Natural killer cell (primary cell): ENCODE measurements at regions of chr3 and their contacts with region 1.

Region 1: GRCh38 chr3:44761424-44762169 is at the starts of genes KIAA1143 and KIF15:
- DNase-seq: peak; percentile 97 to 99
- ATAC-seq: peak; percentile 97 to 98 (median 98)
- H3K4me3 ChIP-seq: peak within 1 kb of the TSS; percentile 60
- H3K4me3 Mint-ChIP-seq: peak within 1 kb of the TSS; percentile 93
- H3K27ac ChIP-seq: peak within 1 kb of the TSS; percentile 66
- H3K27ac Mint-ChIP-seq: peak within 1 kb of the TSS; percentile 89 to 90
- H3K4me1 ChIP-seq: peaks cover 13% of the 10 kb centered on the region
- H3K4me1 Mint-ChIP-seq: peaks cover 28 to 36% of the 10 kb centered on the region in 2 donors
- H3K27me3 ChIP-seq: no peaks in the 10 kb centered on the region
- H3K27me3 Mint-ChIP-seq: no peaks in the 10 kb centered on the region
- CTCF ChIP-seq: no peak
- total RNA-seq, gene KIAA1143: 25.4 to 28.6 (median 27.7) TPM
- total RNA-seq, gene KIF15: 0.80 to 1.6 (median 0.99) TPM

Region 2: DNA sequence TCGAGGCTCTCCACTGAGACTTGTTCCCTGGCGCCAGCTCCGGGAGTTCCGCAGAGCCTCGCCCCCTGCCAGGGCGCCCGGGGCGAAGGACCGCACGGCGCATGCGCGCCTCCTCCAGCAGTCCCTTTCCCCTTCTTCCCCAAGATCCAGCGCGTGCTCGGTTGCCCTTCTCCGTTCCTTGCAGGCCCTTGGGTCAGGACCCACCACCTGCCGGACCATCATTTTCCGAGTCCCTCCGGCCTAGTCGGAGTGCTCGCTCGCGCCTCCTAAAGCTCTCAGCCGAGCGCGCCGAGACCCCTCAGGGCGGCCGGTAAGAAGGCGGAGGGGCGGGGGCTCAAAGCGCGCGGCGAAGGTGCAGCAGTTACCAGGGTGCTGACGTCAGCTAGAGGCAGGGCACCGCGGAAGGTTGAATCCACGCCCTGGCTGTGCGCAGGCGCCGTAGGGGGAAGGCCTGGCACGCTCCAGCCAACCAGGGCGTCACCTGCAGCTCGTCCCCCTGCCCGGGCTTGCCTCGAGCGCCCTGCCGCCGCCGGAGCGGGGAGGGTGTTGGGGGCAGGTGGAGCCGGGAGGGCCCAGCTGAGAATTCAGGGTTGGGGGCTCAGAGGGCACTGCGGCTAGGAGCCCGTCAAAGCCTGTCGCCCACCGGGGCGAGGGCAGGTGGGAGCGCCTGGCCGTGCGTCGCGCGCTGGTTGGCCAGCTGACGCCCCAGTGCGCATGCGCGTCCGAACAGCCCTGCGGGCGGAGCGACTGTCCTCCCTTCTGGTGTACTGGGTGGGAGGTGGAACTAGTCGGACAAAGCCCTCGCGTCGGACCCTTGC is 423.4 kb before region 1 on chr3 and contains the start of gene TCAIM:
- intact Hi-C with region 1: loop called (anchors 10 kb)
- DNase-seq: peak; percentile 98 to 100
- ATAC-seq: peak; percentile 92 to 98 (median 93)
- H3K4me3 ChIP-seq: peak within 1 kb of the TSS; percentile 81
- H3K4me3 Mint-ChIP-seq: peak within 1 kb of the TSS; percentile 96
- H3K27ac ChIP-seq: peak within 1 kb of the TSS; percentile 87
- H3K27ac Mint-ChIP-seq: peak within 1 kb of the TSS; percentile 95 to 96
- H3K4me1 ChIP-seq: peaks cover 13% of the 10 kb centered on the region
- H3K4me1 Mint-ChIP-seq: peaks cover 25 to 32% of the 10 kb centered on the region in 2 donors
- H3K27me3 ChIP-seq: no peaks in the 10 kb centered on the region
- H3K27me3 Mint-ChIP-seq: peaks cover 6 to 9% of the 10 kb centered on the region in 2 donors
- CTCF ChIP-seq: no peak
- total RNA-seq, gene TCAIM: 10.9 to 11.2 (median 11.0) TPM

Region 3: DNA sequence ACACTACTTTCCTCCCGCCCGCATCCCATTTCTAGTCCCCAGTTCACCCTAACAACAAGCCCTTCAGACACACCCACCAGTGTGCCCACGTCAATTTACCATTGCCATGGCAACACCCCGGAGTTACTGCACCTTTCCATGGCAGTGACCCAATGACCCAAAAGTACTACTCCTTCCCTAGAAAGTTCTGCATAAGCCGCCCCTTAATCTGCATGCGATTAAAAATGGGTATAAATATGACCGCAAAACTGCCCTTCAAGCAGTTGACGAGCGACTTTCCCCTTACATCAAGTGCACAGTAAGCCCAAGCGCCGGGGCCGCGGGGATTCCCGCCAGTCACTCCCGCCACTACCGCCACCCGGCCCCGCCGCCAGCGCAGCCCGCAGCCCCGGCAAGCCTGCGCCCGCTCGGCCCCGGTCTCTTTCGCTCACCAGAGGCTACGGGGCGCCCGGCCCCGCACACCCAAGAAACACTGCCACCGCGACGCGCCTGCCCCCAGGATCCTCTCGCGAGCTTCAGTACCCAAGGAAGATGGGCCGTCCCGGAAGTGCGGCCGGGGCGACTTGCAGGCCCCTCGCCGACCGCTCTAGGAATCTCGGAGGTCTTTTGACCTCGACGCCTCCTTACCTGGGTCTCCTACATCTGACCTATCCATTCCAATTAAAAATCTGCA is 76.3 kb before region 1 on chr3:
- intact Hi-C with region 1: loop called (anchors 1 kb)
- DNase-seq: peak; percentile 61 to 68
- ATAC-seq: peak; percentile 75 to 91 (median 83)
- H3K4me3 ChIP-seq: peak overlapping the region; percentile 41
- H3K4me3 Mint-ChIP-seq: peak overlapping the region; percentile 85
- H3K27ac ChIP-seq: peak overlapping the region; percentile 5
- H3K27ac Mint-ChIP-seq: peak overlapping the region; percentile 76 to 86
- H3K4me1 ChIP-seq: peaks cover 9% of the 10 kb centered on the region
- H3K4me1 Mint-ChIP-seq: peaks cover 18 to 21% of the 10 kb centered on the region in 2 donors
- H3K27me3 ChIP-seq: no peaks in the 10 kb centered on the region
- H3K27me3 Mint-ChIP-seq: peaks cover 16 to 25% of the 10 kb centered on the region in 2 donors
- CTCF ChIP-seq: no peak

Region 4: DNA sequence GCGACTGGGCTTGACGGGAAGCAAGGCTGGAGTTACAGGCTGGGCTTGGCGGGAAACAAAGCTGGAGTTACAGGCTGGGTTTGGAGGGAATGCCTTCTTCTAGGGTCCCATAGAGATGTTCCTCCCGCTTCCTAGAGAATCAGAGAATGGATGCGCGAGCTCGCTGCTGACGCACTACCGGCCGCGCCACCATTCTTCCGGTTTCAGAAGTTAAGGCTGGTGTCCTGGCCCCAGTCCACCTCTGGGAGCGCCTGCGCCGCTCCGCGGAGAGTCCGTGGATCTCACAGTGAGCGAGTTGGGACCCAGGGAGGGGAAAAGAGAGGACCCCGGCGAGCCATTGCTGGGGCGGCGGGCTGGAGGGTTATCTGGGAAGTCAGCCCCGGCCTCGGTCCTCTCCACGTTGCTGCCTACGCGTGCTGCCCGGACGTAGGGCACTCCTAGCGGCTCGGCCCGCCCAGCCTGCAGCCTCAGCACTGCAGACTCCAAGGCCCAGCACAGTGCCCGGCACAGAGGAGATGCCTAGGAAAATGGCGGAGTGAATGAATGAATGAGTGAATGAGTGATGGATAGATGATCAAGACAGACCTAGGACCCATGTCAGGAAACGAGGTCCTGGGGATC is 49.0 kb before region 1 on chr3 and contains the start of gene ZNF502:
- intact Hi-C with region 1: loop called (anchors 5 kb)
- DNase-seq: peak; percentile 66 to 77
- ATAC-seq: peak; percentile 86 to 98 (median 96)
- H3K4me3 ChIP-seq: peak within 1 kb of the TSS; percentile 82
- H3K4me3 Mint-ChIP-seq: peak within 1 kb of the TSS; percentile 100
- H3K27ac ChIP-seq: peak within 1 kb of the TSS; percentile 62
- H3K27ac Mint-ChIP-seq: peak within 1 kb of the TSS; percentile 96
- H3K4me1 ChIP-seq: peaks cover 11% of the 10 kb centered on the region
- H3K4me1 Mint-ChIP-seq: peaks cover 14 to 17% of the 10 kb centered on the region in 2 donors
- H3K27me3 ChIP-seq: peaks cover 4% of the 10 kb centered on the region
- H3K27me3 Mint-ChIP-seq: peaks cover 9 to 29% of the 10 kb centered on the region in 2 donors
- CTCF ChIP-seq: peak; percentile 25
- total RNA-seq, gene ZNF502: 2.8 to 7.0 (median 4.4) TPM

Region 5: DNA sequence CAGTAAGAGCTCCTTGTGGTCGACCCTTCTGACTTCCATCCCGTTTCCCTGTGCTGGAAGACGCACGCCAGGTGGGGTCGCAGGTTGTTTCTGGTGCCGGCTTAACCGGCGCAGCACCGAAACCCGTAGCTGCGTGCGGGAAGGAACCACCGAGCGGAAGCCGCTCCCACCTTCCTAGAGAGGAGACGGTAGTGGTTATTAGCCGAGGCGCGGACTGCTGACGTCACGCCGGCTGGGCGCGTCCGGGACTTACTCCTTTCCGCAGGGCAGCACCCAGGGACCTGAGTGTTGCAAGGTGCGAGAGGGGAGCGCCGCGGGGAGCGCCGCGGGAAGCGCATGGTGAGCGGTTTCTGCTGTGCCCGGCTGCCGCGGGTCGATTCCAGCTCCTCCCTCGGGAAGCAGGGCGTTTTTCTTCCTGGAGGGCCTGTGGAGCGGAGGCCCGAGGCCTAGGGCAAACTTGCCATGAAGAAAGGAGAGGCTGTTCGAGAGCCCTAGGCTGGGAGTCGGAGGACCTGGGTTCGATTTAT is 32.1 kb before region 1 on chr3 and contains the start of gene ZNF501:
- intact Hi-C with region 1: loop called (anchors 1 kb)
- DNase-seq: peak; percentile 79 to 91
- ATAC-seq: peak; percentile 86 to 96 (median 96)
- H3K4me3 ChIP-seq: peak within 1 kb of the TSS; percentile 60
- H3K4me3 Mint-ChIP-seq: peak within 1 kb of the TSS; percentile 99
- H3K27ac ChIP-seq: no peak within 1 kb of the TSS
- H3K27ac Mint-ChIP-seq: peak within 1 kb of the TSS; percentile 94 to 98
- H3K4me1 ChIP-seq: peaks cover 3% of the 10 kb centered on the region
- H3K4me1 Mint-ChIP-seq: peaks cover 17% of the 10 kb centered on the region in 2 donors
- H3K27me3 ChIP-seq: no peaks in the 10 kb centered on the region
- H3K27me3 Mint-ChIP-seq: no peaks in the 10 kb centered on the region
- CTCF ChIP-seq: no peak
- total RNA-seq, gene ZNF501: 0.40 to 2.2 (median 1.7) TPM

Region 6: GRCh38 chr3:44861412-44862220 is 100.0 kb after region 1 on chr3 and contains the start of gene TMEM42:
- intact Hi-C with region 1: loop called (anchors 1 kb)
- DNase-seq: peak; percentile 92 to 95
- ATAC-seq: peak; percentile 93 to 95 (median 94)
- H3K4me3 ChIP-seq: peak within 1 kb of the TSS; percentile 81
- H3K4me3 Mint-ChIP-seq: peak within 1 kb of the TSS; percentile 94
- H3K27ac ChIP-seq: peak within 1 kb of the TSS; percentile 95
- H3K27ac Mint-ChIP-seq: peak within 1 kb of the TSS; percentile 94 to 96
- H3K4me1 ChIP-seq: peaks cover 35% of the 10 kb centered on the region
- H3K4me1 Mint-ChIP-seq: peaks cover 33 to 47% of the 10 kb centered on the region in 2 donors
- H3K27me3 ChIP-seq: no peaks in the 10 kb centered on the region
- H3K27me3 Mint-ChIP-seq: no peaks in the 10 kb centered on the region
- CTCF ChIP-seq: no peak
- total RNA-seq, gene TMEM42: 9.9 to 15.9 (median 11.3) TPM

Region 7: DNA sequence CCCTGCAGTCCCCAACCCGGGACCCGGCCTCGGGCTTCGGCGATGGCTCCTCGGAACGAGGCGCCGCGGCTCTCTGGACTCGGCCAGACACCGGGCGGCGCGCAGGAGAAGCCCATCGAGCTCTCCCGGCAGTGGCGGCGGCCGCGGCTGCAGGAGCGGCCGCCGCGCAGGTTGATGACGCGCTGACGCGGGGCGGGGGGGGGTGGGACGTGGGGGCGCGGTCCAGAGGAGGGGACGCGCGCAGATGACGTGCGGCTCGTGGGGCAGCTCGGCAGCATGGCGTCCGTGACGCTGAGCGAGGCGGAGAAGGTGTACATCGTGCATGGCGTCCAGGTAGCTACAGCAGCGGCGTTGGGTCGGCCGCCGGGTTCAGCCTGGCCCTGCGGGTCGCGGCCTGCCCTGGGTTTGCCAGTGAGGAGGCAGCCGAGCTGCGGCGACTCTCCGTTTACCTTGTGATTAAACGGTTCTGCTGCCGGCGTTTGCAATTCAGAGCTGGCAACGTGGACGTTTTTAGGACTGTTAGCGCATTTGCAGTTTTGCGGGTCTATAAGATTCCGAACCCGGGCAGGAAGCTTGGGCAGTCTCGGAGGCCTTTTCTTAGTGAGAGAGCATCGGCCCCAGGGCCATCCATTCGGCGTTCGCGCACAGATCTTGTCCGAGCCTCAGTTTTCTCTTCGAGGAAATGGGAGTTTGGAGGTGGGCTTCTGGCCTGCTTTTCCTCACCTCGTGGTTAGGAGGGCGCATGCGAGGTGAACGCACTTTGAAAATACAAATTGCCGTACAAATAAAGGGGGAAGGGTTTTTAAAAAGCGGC is 214.6 kb after region 1 on chr3 and contains the starts of genes EXOSC7 and ZDHHC3:
- intact Hi-C with region 1: loop called (anchors 2 kb)
- DNase-seq: peak; percentile 80 to 96
- ATAC-seq: peak; percentile 94 to 95 (median 94)
- H3K4me3 ChIP-seq: peak within 1 kb of the TSS; percentile 97
- H3K4me3 Mint-ChIP-seq: peak within 1 kb of the TSS; percentile 98
- H3K27ac ChIP-seq: peak within 1 kb of the TSS; percentile 85
- H3K27ac Mint-ChIP-seq: peak within 1 kb of the TSS; percentile 93 to 98
- H3K4me1 ChIP-seq: peaks cover 26% of the 10 kb centered on the region
- H3K4me1 Mint-ChIP-seq: peaks cover 61 to 68% of the 10 kb centered on the region in 2 donors
- H3K27me3 ChIP-seq: no peaks in the 10 kb centered on the region
- H3K27me3 Mint-ChIP-seq: no peaks in the 10 kb centered on the region
- CTCF ChIP-seq: no peak
- total RNA-seq, gene EXOSC7: 32.8 to 46.6 (median 36.0) TPM
- total RNA-seq, gene ZDHHC3: 62.3 to 100.0 (median 78.6) TPM